ENCODE measurements at regions of chr11 and their contacts with region 1.

Region 1: DNA sequence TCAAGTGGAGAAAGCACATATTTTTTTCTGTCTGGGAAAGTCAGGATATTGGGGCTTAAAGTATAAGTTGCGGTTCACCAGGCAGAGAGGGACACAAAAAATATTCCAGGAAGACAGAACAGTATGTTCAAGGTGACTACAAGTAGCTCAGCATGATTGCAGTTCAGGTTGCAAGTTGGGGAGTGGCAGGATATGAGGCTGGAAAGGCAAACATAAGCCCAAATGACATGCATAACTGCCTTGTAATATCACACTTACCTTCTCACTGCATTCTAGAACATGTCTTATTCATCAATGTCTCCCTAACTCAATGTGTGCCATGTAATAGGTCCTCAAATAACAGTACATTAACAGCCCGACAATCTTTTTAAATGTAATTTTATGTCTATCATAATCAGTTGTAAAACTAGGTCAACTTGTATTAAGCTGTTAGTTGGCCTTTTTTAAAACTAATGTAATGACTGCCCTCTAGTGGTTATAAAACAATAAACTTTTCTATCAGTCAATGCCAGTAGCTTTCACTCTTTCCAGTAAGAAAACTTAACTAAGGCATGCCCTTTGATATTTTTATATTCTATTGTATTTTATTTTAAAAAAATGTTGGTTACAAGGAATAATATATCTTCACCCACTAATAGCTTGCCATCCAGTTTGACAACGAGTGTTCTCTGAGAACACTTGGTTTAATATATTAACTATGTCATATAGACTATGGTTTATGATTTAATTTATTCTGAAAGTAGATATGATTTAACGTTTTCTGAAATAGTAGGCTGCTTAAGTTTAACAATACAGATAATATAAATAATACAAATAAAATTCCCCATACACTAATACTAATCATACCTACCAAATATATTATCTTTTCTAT is 39.4 kb upstream of the CFAP300 start:
- DNase-seq: peak; percentile 76
- H3K4me3 ChIP-seq: no peak overlapping the region
- H3K27ac ChIP-seq: no peak overlapping the region
- H3K4me1 ChIP-seq: peaks cover 8% of the 10 kb centered on the region
- H3K27me3 ChIP-seq: no peaks in the 10 kb centered on the region
- CTCF ChIP-seq: peak; percentile 66

Region 2: GRCh38 chr11:101456812-101457211 is 551.0 kb before region 1 on chr11:
- CTCF ChIA-PET with region 1: no interaction called
- POLR2A ChIA-PET with region 1: no interaction called
- intact Hi-C with region 1: loop called (anchors 5 kb)
- DNase-seq: peak; percentile 37
- H3K4me3 ChIP-seq: no peak overlapping the region
- H3K27ac ChIP-seq: no peak overlapping the region
- H3K4me1 ChIP-seq: no peaks in the 10 kb centered on the region
- H3K27me3 ChIP-seq: no peaks in the 10 kb centered on the region
- CTCF ChIP-seq: peak; percentile 58; the same call in 1 of the 2 replicates

Region 3: GRCh38 chr11:101470881-101471520 is 536.8 kb before region 1 on chr11:
- CTCF ChIA-PET with region 1: no interaction called
- POLR2A ChIA-PET with region 1: no interaction called
- intact Hi-C with region 1: no loop called
- DNase-seq: no peak
- H3K4me3 ChIP-seq: no peak overlapping the region
- H3K27ac ChIP-seq: no peak overlapping the region
- H3K4me1 ChIP-seq: no peaks in the 10 kb centered on the region
- H3K27me3 ChIP-seq: no peaks in the 10 kb centered on the region
- CTCF ChIP-seq: no peak

Region 4: DNA sequence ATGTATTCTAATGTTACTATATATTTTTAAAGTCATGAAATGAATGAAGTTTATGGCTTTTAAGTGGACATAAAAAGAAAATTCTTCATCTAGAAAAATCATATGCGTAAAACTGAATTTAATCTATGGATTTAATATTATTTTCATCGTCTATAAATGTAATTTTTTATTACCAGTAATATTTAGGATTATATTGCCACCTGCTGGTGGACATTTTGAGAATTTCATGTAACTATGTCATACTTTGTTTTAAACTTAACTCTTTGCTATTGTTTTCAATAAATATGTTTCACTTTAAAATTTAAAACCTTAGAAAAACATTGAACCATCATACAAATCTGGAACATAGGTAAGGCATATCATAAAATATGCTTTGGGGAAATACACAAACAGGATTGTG is 159.5 kb before region 1 on chr11:
- CTCF ChIA-PET with region 1: interaction called, 12 read pairs
- POLR2A ChIA-PET with region 1: no interaction called
- intact Hi-C with region 1: no loop called
- DNase-seq: peak; percentile 24
- H3K4me3 ChIP-seq: no peak overlapping the region
- H3K27ac ChIP-seq: no peak overlapping the region
- H3K4me1 ChIP-seq: no peaks in the 10 kb centered on the region
- H3K27me3 ChIP-seq: no peaks in the 10 kb centered on the region
- CTCF ChIP-seq: peak; percentile 65; the same call in 1 of the 2 replicates

Region 5: GRCh38 chr11:101860696-101861427 is 146.9 kb before region 1 on chr11:
- CTCF ChIA-PET with region 1: interaction called, 54 read pairs
- POLR2A ChIA-PET with region 1: no interaction called
- intact Hi-C with region 1: loop called (anchors 2 kb)
- DNase-seq: peak; percentile 74
- H3K4me3 ChIP-seq: no peak overlapping the region
- H3K27ac ChIP-seq: no peak overlapping the region
- H3K4me1 ChIP-seq: peaks cover 10% of the 10 kb centered on the region
- H3K27me3 ChIP-seq: no peaks in the 10 kb centered on the region
- CTCF ChIP-seq: peak; percentile 88

Region 6: GRCh38 chr11:102061276-102061675 is 53.5 kb after region 1 on chr11:
- CTCF ChIA-PET with region 1: no interaction called
- POLR2A ChIA-PET with region 1: no interaction called
- intact Hi-C with region 1: no loop called
- DNase-seq: peak; percentile 55
- H3K4me3 ChIP-seq: no peak overlapping the region
- H3K27ac ChIP-seq: no peak overlapping the region
- H3K4me1 ChIP-seq: no peaks in the 10 kb centered on the region
- H3K27me3 ChIP-seq: no peaks in the 10 kb centered on the region
- CTCF ChIP-seq: peak; percentile 74

Region 7: DNA sequence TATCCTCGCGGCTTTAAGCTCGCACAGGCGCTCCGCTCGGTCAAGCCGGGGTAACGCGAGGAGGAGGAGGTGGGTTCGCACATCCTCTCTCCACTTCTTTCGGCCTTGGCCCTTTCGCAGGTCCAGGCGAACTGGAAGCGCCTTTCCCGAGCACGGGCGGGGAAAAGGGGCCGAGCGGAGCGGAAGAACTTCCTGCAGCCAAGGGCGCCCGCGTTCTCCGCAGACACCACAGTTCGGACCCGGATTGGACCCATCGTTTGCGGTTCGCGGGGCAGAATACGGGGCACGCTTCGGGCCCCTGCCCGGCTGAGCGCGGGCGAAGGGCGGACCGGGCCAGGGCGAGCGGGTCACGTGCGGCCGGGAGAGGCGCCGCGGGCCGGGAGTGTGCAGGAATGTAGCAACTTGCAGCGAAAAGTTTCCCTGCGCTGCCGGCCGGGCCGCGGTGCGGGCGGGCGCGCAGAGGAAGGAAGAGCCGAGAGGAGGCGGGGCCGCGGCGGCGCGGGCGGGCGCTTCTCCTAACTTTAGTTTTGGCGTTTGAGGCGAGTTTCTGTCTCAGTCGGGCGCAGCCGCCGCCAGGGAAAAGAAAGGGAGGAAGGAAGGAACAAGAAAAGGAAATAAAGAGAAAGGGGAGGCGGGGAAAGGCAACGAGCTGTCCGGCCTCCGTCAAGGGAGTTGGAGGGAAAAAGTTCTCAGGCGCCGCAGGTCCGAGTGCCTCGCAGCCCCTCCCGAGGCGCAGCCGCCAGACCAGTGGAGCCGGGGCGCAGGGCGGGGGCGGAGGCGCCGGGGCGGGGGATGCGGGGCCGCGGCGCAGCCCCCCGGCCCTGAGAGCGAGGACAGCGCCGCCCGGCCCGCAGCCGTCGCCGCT is 102.3 kb after region 1 on chr11 and contains the start of gene YAP1:
- CTCF ChIA-PET with region 1: no interaction called
- POLR2A ChIA-PET with region 1: no interaction called
- intact Hi-C with region 1: loop called (anchors 5 kb)
- DNase-seq: peak; percentile 98
- H3K4me3 ChIP-seq: peak within 1 kb of the TSS; percentile 85
- H3K27ac ChIP-seq: peak within 1 kb of the TSS; percentile 97
- H3K4me1 ChIP-seq: peaks cover 35% of the 10 kb centered on the region
- H3K27me3 ChIP-seq: no peaks in the 10 kb centered on the region
- CTCF ChIP-seq: no peak
- total RNA-seq, gene YAP1: 124 and 134 TPM in 2 replicates

Measured in A673 (cell line).